Activated naive CD4-positive, alpha-beta T cell treated with anti-CD3 and anti-CD28 coated beads for 36 hours (primary cell): ENCODE measurements at regions of chr1 and their contacts with region 1.

Region 1: DNA sequence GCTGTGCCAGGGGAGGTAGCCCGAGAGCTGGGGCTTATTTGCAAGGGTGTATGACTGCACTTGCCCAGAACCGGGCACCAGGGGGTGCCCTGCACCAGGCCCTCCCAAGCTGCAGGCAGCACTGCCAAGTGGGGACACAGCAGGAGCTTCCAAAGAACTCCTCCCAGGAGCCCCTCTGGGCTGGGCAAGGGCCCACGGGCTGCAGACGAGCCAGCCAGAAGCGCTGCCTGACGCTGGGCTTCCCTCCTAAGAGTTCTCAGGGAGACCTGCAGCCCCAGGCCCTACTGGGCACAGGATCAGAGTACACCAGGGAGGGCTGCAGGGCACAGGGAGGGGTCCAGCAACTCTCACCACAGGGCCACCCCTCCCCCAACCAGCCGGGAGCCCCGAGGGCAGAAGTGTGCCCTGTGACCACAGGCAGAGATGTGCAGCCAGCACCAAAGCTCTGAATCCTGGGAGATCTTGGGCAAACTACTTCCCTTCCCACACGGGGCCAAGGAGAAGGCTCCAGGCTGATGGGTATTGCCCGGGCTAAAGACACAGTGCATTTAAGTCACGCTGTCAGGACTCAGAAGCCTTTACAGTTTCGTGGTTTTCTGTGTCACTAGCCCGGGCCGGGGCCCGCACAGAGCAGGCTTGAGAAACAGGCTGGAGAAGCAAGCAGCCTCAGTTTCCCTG is 63.4 kb downstream of the KCNAB2 start:
- DNase-seq: peak; percentile 63
- H3K4me3 Mint-ChIP-seq: no peak overlapping the region
- H3K27ac Mint-ChIP-seq: no peak overlapping the region
- H3K4me1 Mint-ChIP-seq: no peaks in the 10 kb centered on the region
- H3K27me3 Mint-ChIP-seq: peaks cover 9% of the 10 kb centered on the region

Region 2: DNA sequence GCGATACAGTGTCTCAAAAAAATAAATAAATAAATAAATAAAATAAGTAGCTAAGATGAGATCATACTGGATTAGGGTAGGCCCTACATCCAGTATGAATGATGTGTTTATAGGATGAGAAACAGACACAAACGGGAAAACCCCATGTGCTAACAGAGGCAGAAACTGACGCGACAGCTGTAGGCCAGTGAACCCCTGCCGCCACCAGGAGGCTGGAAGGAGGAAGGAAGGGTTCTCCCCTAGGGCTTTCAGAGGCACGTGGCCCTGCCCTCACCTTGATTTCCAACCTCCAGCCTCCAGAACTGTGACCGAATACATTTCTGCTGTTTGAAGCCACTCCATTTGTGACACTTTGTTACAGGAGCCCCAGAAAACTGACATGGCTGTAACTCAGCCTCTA is 32.5 kb after region 1 on chr1:
- CTCF ChIA-PET with region 1: no interaction called
- intact Hi-C with region 1: loop called (anchors 2 kb)
- DNase-seq: peak; percentile 80
- H3K4me3 Mint-ChIP-seq: no peak overlapping the region
- H3K27ac Mint-ChIP-seq: no peak overlapping the region
- H3K4me1 Mint-ChIP-seq: no peaks in the 10 kb centered on the region
- H3K27me3 Mint-ChIP-seq: no peaks in the 10 kb centered on the region

Region 3: GRCh38 chr1:6185635-6186382 is 76.7 kb after region 1 on chr1:
- CTCF ChIA-PET with region 1: no interaction called
- intact Hi-C with region 1: loop called (anchors 5 kb)
- DNase-seq: peak; percentile 54
- H3K4me3 Mint-ChIP-seq: no peak overlapping the region
- H3K27ac Mint-ChIP-seq: no peak overlapping the region
- H3K4me1 Mint-ChIP-seq: peaks cover 56% of the 10 kb centered on the region
- H3K27me3 Mint-ChIP-seq: peaks cover 15% of the 10 kb centered on the region

Region 4: GRCh38 chr1:6275826-6276782 is 167.0 kb after region 1 on chr1:
- CTCF ChIA-PET with region 1: no interaction called
- intact Hi-C with region 1: no loop called
- DNase-seq: no peak
- H3K4me3 Mint-ChIP-seq: no peak overlapping the region
- H3K27ac Mint-ChIP-seq: no peak overlapping the region
- H3K4me1 Mint-ChIP-seq: no peaks in the 10 kb centered on the region
- H3K27me3 Mint-ChIP-seq: no peaks in the 10 kb centered on the region

Region 5: GRCh38 chr1:6948861-6949260 is 839.8 kb after region 1 on chr1:
- CTCF ChIA-PET with region 1: no interaction called
- intact Hi-C with region 1: no loop called
- DNase-seq: no peak
- H3K4me3 Mint-ChIP-seq: no peak overlapping the region
- H3K27ac Mint-ChIP-seq: no peak overlapping the region
- H3K4me1 Mint-ChIP-seq: no peaks in the 10 kb centered on the region
- H3K27me3 Mint-ChIP-seq: no peaks in the 10 kb centered on the region